Posterior vena cava (tissue), 2 donors: ENCODE measurements at regions of chr13 and their contacts with region 1.

Region 1: DNA sequence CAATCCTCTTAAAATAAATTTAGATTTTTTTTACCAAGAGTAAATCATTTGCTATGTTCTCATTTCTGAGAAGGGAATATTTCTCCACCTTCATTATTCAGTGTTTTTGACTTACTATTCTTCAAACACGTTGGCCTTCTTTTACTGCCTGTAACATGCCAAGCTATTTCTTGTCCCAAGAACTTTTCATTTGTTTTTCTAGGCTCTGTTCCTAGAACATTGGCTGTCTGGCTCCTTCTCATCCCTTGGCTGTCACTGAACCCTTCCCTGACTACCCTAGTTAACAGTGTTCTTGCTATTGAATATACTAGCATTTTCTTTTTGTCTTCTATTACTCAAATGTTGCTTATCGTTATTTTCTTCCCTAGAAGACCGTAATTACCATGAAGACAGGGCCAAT is 248.1 kb downstream of the ITGBL1 start:
- DNase-seq: no peak

Region 2: GRCh38 chr13:101520672-101521071 is 179.9 kb before region 1 on chr13:
- intact Hi-C with region 1: loop called in 1 of 2 experiments (anchors 5 kb)
- DNase-seq: no peak

Region 3: GRCh38 chr13:101626925-101627555 is 73.6 kb before region 1 on chr13:
- intact Hi-C with region 1: no loop called
- DNase-seq: no peak

Region 4: GRCh38 chr13:101739382-101740178 is 39.0 kb after region 1 on chr13:
- intact Hi-C with region 1: no loop called
- DNase-seq: no peak